Activated CD4-positive, alpha-beta T cell treated with anti-CD3 and anti-CD28 coated beads, Interleukin-2, amount 10 ng/mL, durations not matched to agents 24 days and 14 days (primary cell): ENCODE measurements at regions of chr21 and their contacts with region 1.

Region 1: DNA sequence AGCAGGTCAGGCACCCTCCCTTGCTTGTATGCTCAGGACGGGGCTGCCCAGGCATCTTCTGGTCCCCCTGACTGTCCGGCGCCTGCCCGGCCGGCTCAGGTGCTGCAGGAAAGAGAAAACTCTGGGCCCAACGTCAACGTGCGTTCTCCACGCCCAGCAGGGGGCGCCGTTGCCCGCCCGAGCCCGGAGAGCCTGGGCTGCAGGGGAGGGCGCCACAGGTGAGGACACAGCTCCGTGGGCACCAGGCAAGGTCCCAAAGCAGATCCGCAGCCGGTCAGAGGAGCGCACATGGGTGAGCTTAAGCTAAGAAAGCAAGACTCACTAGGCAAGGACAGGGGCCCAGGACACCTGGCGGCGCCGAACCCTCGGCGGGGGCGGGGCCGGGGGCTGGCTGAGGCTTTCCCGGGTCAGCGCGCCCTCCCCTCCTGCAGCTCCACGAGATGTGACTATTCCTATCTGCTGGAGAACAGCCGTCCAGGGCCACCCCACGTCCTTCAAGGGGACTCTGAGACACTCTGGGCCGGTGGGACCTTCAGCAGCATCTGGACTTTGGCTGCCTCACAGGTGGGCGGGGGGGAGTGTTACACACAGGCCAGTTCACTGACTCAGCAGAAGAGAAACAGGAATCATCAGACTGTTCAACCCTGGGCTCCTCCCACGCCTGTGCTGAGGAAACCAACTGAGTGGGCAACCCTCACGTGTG is 29.3 kb downstream of the KRTAP10-1 start:
- DNase-seq: peak; percentile 94
- H3K4me3 Mint-ChIP-seq: peak overlapping the region; percentile 15
- H3K27ac Mint-ChIP-seq: no peak overlapping the region
- H3K4me1 Mint-ChIP-seq: no peaks in the 10 kb centered on the region
- H3K27me3 Mint-ChIP-seq: no peaks in the 10 kb centered on the region

Region 2: DNA sequence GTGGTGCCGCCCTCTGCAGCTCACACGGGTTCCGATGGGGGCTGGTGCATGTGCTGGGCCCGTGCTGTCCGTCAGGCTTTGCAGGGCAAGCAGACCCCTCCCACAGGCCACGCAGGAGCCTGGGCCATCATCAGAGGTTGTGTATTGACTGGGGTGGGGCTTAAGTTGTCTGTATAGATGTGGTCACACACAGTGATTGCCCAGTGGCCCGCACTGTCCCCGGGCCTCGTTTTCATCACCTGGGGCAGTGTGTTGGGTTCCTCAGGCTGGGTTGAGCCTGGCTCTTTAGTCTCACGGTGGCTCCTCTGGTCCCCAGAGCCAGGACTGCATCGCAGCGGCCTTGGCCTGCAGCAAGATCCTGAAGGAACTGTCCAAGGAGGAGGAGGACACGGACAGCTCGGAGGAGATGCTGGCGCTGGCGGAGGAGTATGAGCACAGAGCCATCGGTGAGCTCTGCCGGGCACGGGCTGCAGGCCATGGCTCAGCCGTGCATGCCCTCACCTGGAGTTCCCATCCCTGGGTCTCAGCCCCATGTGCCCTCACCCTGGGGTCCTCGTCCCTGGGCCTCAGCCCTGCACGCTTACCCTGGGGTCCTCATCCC is 113.1 kb before region 1 on chr21:
- intact Hi-C with region 1: no loop called
- DNase-seq: no peak
- H3K4me3 Mint-ChIP-seq: no peak overlapping the region
- H3K27ac Mint-ChIP-seq: no peak overlapping the region
- H3K4me1 Mint-ChIP-seq: peaks cover 2% of the 10 kb centered on the region
- H3K27me3 Mint-ChIP-seq: no peaks in the 10 kb centered on the region

Region 3: DNA sequence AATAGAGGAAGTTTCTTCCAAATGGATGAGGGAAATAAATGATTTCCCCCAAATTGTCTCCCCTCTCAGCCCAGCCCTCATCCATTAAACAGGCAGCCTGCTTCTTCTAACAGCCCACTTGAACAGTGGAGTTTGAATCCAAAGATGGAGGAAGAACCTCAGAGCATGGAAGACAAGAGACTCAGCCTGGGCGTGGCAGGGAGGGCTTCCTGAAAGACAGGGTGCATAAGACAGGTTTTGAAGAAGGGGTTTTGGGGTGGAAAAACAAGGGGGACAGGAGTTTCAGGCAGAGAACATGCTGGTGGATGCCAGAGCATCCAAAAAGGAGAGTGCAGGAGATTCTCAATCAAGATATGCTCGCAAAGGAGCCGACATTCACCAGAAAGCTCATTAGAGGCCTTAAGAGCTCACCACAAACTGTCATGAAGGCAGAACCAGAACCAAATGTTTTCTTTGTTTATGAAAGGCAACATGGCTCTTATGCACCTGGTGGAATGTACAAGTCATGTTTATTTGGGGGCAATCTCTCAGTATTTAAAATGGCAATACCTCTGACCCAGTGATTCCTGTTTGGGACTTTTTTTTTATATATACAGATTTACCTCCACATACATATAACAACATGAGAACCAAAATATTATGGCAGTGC is 227.2 kb after region 1 on chr21:
- intact Hi-C with region 1: loop called (anchors 10 kb)
- DNase-seq: no peak
- H3K4me3 Mint-ChIP-seq: no peak overlapping the region
- H3K27ac Mint-ChIP-seq: no peak overlapping the region
- H3K4me1 Mint-ChIP-seq: peaks cover 2% of the 10 kb centered on the region
- H3K27me3 Mint-ChIP-seq: peaks cover 19% of the 10 kb centered on the region

Region 4: GRCh38 chr21:44792702-44793591 is 282.3 kb after region 1 on chr21:
- intact Hi-C with region 1: loop called (anchors 1 kb)
- DNase-seq: peak; percentile 87
- H3K4me3 Mint-ChIP-seq: no peak overlapping the region
- H3K27ac Mint-ChIP-seq: peak overlapping the region; percentile 52
- H3K4me1 Mint-ChIP-seq: peaks cover 28% of the 10 kb centered on the region
- H3K27me3 Mint-ChIP-seq: no peaks in the 10 kb centered on the region